Right cardiac atrium (tissue), 5 donors: ENCODE measurements at regions of chr12 and their contacts with region 1.

Region 1: DNA sequence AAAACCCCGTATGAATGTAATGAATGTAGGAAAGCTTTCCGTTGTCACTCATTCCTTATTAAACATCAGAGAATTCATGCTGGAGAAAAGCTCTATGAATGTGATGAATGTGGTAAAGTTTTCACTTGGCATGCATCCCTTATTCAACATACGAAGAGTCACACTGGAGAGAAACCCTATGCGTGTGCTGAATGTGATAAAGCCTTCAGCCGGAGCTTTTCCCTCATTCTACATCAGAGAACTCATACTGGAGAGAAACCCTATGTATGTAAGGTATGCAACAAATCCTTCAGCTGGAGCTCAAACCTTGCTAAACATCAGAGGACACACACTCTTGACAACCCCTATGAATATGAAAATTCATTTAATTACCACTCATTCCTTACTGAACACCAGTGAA is 23.8 kb downstream of the ZNF891 start:
- DNase-seq: no peak
- ATAC-seq: no peak
- H3K4me3 ChIP-seq: peak overlapping the region; percentile 5
- H3K27ac ChIP-seq: no peak overlapping the region
- H3K4me1 ChIP-seq: no peaks in the 10 kb centered on the region
- H3K27me3 ChIP-seq: no peaks in the 10 kb centered on the region

Region 2: DNA sequence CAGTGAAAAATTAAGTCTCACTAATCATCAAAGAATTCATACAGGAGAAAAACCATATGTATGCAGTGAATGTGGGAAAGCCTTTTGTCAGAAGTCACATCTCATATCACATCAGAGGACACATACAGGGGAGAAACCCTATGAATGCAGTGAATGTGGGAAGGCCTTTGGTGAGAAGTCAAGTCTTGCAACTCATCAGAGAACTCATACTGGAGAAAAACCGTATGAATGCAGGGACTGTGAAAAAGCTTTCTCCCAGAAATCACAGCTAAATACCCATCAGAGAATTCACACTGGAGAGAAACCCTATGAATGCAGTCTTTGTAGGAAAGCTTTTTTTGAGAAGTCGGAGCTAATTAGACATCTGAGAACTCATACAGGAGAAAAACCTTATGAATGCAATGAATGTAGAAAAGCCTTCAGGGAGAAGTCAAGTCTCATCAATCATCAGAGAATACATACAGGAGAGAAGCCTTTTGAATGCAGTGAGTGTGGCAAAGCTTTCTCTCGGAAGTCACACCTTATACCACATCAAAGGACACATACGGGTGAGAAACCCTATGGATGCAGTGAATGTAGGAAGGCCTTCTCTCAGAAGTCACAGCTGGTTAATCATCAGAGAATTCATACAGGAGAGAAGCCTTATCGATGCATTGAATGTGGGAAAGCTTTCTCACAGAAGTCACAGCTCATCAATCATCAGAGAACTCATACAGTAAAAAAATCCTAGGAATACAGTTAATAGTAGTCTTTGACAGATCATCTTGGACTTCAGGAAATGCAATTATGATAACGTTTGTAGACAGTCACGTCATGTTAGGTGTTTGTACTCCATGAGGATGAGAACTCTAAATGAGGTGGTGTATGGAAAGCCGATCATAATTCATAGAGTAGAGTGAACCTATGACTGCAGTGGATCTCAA is 47.8 kb before region 1 on chr12:
- intact Hi-C with region 1: loop called in 1 of 4 experiments (anchors 5 kb)
- DNase-seq: no peak
- ATAC-seq: no peak
- H3K4me3 ChIP-seq: peak overlapping the region; percentile 37
- H3K27ac ChIP-seq: no peak overlapping the region
- H3K4me1 ChIP-seq: no peaks in the 10 kb centered on the region
- H3K27me3 ChIP-seq: no peaks in the 10 kb centered on the region

Region 3: DNA sequence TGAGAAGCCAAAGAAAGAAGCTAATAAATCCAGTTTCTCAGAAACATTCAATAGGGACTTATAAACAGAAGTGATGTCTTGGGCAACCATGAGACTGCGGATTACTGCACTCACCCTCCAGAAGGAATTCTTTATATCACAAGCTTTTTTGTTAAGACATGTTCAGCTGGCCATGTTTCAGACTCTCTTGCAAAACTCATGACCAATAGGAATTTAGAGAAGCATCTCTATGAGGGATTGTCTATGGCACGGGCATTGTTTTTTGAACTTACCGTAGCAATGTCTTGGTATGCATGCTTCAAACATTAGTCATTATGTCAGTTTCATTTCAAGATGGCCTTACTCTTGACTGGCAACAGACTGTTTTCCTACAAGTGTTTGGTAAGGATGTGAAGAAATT is 59.5 kb after region 1 on chr12:
- intact Hi-C with region 1: no loop called
- DNase-seq: no peak
- ATAC-seq: no peak
- H3K4me3 ChIP-seq: no peak overlapping the region
- H3K27ac ChIP-seq: no peak overlapping the region
- H3K4me1 ChIP-seq: no peaks in the 10 kb centered on the region
- H3K27me3 ChIP-seq: no peaks in the 10 kb centered on the region